Lower leg skin (tissue), 4 donors: ENCODE measurements at regions of chr4 and their contacts with region 1.

Region 1: DNA sequence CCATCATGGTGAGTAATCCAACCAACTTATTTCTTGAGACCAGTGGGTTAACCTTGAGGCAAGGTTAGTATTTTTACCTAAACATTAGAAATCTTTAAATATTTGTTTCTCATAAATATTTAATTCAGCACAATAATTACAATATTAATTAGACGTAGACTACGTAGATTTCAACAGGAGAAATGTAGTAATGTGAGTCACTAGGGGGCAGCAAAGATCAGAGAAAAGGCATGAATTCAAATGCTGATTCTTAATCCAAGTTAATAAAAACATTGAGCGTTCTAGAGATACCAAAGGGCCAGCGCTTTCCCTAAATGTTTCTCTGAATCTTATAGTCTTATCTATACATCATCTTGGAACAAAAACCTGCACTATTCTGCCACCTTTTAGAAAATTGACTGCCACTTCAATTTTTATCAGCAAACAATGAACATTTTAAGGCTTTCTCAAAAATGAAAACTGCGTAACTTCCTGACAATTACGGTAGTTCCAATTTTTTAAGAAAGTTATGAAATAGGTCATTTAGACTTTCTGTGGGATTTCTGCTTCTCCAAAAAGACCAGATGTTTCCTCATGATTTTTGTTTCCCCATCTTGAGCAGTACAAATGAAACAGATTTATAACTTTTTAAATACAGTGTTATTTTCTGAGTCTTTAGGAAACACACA is 180.7 kb downstream of the GASK1B start:
- DNase-seq: peak in 1 of 2 donors; percentile 64
- H3K4me3 ChIP-seq: no peak overlapping the region
- CTCF ChIP-seq: peak in 1 of 3 donors; percentile 64
- POLR2A ChIP-seq: no peak

Region 2: GRCh38 chr4:158172261-158173258 is 180.4 kb after region 1 on chr4 and contains the start of gene GASK1B:
- intact Hi-C with region 1: loop called (anchors 10 kb)
- DNase-seq: peak in 1 of 2 donors; percentile 39
- H3K4me3 ChIP-seq: no peak within 1 kb of the TSS
- CTCF ChIP-seq: no peak
- POLR2A ChIP-seq: no peak
- total RNA-seq, gene GASK1B: 3.8 to 10.8 (median 5.3) TPM